Psoas muscle (tissue), 8 donors: ENCODE measurements at regions of chr3 and their contacts with region 1.

Region 1: GRCh38 chr3:11379233-11379823 is 107.1 kb downstream of the ATG7 start:
- DNase-seq: no peak
- ATAC-seq: peak; percentile 38 to 78 (median 57)
- H3K4me3 ChIP-seq: peak overlapping the region; percentile 28
- H3K27ac ChIP-seq: peak overlapping the region; percentile 72
- H3K4me1 ChIP-seq: peaks cover 26% of the 10 kb centered on the region
- H3K27me3 ChIP-seq: no peaks in the 10 kb centered on the region
- CTCF ChIP-seq: peak; percentile 69

Region 2: DNA sequence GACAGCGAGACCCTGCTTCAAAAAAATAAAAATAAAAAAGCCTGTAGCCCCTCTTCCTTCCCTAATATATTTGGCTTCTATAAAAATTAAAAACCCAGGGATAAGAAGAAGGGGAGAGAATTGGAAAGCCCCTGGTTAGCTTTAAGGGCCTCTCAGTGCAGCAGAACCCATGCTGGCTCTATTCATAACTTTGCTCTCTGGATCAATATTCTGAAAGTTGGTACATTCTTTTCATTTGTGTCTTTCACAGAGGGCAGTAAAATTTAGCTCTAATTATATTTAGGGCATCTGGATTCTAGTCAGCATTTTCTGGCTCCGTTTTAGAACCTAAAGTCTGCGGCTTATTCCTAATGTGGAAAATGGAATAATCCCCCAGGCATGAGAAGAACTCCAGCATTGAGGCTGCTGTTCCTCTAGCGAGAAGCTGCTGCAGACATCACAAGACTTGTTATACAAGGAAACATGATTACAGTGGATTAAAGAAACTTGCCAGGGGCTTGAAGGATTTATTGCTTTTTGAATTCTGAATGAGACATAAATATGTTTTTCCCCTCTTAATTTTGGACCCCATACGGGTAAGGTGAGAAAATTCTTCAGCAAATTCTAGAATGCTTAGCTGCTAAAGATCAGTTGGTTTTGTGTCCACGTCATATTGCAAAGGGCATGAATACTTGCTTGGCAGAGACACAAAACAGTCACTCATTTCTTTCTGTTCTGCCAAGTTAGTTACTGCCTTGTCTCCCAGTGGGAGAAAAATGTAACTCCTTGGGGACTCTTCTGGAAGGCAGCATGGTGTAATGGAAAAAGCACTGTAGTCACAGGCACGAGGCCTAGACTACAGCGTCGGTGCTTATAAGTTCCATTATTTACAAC is 86.7 kb after region 1 on chr3:
- intact Hi-C with region 1: loop called in 1 of 2 experiments (anchors 5 kb)
- DNase-seq: no peak
- ATAC-seq: peak; percentile 46 to 69 (median 66)
- H3K4me3 ChIP-seq: peak overlapping the region; percentile 6
- H3K27ac ChIP-seq: peak overlapping the region; percentile 94
- H3K4me1 ChIP-seq: peaks cover 40% of the 10 kb centered on the region
- H3K27me3 ChIP-seq: no peaks in the 10 kb centered on the region
- CTCF ChIP-seq: no peak

Region 3: GRCh38 chr3:11651900-11652299 is 272.6 kb after region 1 on chr3:
- intact Hi-C with region 1: loop called (anchors 2 kb)
- DNase-seq: no peak
- ATAC-seq: peak in 2 of 4 donors; percentile 47 to 74
- H3K4me3 ChIP-seq: no peak overlapping the region
- H3K27ac ChIP-seq: no peak overlapping the region
- H3K4me1 ChIP-seq: peaks cover 3% of the 10 kb centered on the region
- H3K27me3 ChIP-seq: no peaks in the 10 kb centered on the region
- CTCF ChIP-seq: peak; percentile 73

Region 4: DNA sequence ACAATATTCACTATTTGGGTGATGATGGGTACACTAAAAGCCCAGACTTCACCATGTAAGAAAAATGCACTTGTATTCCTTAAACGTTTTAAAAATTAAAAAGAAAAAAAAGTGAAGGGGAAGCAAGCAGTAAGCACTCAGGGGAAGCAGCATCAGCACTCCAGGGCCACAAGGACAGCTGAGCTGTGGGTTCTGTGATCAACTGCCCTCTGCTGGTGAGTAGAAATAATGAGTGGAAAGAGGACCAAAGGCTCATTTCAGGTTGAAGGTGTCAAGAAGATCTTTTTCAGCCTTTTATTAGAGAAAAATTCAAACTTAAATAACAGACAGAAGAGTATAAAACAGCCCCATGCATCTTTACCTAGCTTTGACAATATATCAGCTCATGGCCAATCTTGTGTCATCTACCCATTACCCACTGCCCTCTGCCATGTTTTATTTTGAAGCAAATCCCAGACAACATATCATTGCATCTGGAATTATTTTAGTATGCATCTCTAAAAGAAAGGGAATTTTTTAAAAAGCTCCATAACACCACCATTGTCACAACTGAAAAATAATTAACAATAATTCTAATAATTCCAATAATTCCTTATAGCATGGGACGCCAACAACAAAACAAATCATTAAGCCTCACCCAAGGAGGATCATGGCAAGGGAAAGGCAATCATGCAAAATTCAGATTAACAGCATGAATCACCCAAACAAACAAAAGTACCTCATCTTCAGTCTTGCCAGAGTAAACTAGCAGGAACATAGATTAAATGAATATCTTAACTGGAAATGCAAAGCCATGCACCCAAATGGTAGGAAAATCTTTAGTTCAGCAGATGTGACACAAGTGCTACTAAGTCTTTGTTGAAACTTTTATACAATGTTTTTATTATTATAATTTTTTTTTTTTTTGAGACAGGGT is 424.9 kb after region 1 on chr3:
- intact Hi-C with region 1: loop called (anchors 2 to 5 kb)
- DNase-seq: peak; percentile 21 to 59
- ATAC-seq: peak; percentile 68 to 92 (median 79)
- H3K4me3 ChIP-seq: no peak overlapping the region
- H3K27ac ChIP-seq: no peak overlapping the region
- H3K4me1 ChIP-seq: no peaks in the 10 kb centered on the region
- H3K27me3 ChIP-seq: no peaks in the 10 kb centered on the region
- CTCF ChIP-seq: peak; percentile 79